AG04449 (cell line): ENCODE measurements at regions of chr16 and their contacts with region 1.

Region 1: DNA sequence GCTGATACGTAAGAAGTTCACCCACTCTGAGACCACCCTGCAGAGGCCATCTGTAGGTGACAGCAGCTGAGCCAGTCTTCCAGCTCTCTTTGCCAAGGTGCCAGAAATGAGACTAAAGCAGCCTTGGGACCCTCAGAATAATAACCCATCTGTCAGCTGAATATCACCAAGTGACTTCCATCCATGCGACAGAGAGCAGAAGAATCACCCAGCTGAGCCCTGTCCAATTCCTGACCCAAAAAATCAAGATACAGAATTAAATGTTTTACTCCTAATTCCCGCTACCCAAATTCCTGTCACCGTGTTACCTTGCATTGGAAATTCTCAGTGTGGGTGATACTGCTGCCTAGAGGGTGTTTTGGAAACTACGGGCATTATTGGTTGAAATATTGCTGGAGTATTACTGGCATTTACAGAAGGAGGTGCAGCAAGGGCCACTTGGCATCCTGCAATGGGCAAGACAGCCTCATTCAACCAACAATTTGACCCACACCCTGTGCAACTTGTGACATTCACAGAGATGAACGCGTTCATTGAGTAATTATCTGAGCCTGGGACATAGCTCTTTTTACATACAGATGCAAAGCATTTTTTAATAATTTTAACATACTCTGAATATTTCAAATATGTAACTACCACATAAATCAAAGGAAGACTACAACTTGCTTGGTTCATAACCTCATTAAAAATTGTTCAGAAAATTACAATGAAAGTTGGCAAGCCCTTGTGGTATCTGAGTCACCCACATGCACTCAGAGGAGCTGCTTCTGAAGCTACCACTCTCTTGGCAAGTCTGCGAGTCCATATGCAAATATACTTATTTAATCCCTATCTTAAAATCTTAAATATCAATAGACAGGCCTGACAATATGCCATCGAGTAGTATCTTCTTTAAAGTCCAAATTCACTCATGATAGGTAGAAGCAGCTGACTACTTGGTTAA is 126.6 kb downstream of the C16orf95 start:
- DNase-seq: no peak
- H3K4me3 ChIP-seq: no peak overlapping the region
- CTCF ChIP-seq: no peak

Region 2: GRCh38 chr16:87203060-87203656 is 12.6 kb after region 1 on chr16:
- CTCF ChIA-PET with region 1: interaction called, 35 read pairs
- POLR2A ChIA-PET with region 1: no interaction called
- DNase-seq: peak; percentile 60
- H3K4me3 ChIP-seq: no peak overlapping the region
- CTCF ChIP-seq: peak; percentile 97